Right ventricle myocardium inferior (tissue), 1 donor: ENCODE measurements at regions of chr14 and their contacts with region 1.

Region 1: GRCh38 chr14:21071225-21072030 is 1.3 kb downstream of the ARHGEF40 start:
- DNase-seq: peak; percentile 96
- ATAC-seq: peak; percentile 75

Region 2: GRCh38 chr14:20970983-20971704 is 100.3 kb before region 1 on chr14:
- intact Hi-C with region 1: no loop called
- DNase-seq: peak; percentile 95
- ATAC-seq: peak; percentile 97

Region 3: GRCh38 chr14:21024585-21025370 is 46.6 kb before region 1 on chr14 and contains the start of gene NDRG2:
- intact Hi-C with region 1: loop called (anchors 2 kb)
- DNase-seq: peak; percentile 93
- ATAC-seq: peak; percentile 87
- total RNA-seq, gene NDRG2: 321 TPM

Region 4: GRCh38 chr14:21092273-21093011 is 21.0 kb after region 1 on chr14:
- intact Hi-C with region 1: loop called (anchors 1 kb)
- DNase-seq: peak; percentile 94
- ATAC-seq: peak; percentile 88

Region 5: DNA sequence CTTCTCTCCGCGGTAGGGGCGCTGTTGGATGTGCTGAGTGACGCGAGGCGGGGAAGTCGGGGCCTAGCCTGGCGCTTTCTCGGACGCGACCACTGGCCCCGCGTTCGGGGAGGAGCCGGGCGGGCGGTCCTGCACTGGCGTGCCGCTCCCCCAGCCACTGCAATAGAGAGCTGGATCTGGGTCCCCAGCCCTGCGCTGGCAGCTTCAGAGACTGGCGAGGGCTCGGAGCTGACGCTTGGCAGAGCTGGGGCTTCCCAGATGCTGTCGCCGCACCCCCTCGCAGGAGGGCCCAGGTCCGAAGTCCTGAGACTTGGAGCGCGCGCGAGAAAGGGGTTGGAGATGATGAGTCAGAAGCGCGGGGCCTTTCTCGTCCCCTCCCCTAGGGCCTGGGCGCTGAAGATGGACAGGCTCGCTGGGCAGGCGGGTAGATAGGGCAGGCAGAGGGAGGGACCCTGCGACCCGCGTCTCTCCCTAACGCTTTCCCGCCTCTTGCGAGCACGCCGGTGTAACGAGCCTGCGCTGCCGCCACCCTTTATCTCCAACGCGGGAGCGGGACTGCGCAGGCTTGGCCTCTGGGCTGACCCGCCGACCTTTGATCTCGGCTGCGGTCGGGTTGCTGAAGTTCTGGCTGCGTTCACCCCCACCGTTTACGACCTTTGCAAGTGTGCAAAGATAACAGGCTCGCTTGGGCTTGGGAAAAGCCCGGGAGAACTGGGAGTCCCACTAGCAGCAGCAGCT is 32.5 kb after region 1 on chr14:
- intact Hi-C with region 1: loop called (anchors 1 kb)
- DNase-seq: peak; percentile 97
- ATAC-seq: peak; percentile 96